T-cell (primary cell): ENCODE measurements at regions of chr10 and their contacts with region 1.

Region 1: DNA sequence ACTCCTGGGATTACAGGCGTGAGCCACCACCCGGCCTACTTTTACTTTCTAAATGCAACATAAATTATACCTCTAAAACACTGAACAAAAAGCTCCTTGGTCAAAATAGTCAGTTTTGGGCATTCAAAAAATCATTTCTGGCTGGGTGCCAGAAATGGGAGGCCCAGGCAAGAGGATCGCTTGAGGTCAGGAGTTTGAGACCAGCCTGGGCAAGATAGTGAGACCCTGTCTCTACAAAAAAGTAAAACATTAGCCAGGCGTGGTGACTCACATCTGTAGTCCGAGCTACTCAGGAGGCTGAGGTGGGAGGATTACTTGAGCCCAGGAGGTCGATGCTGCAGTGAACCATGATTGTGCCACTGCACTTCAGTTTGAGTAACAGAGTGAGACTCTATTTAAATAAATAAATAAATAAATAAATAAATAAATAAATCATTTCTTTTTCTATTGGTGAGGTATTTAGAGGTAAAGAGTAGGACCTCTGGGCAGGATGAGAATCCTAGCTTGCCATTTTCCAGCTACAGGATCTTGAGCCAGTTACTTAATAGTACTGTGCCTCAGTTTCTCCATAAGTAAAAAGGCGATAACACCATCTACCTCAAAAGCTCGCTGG is 87.6 kb downstream of the SKIDA1 start:
- DNase-seq: no peak
- ATAC-seq: no peak
- H3K4me3 ChIP-seq: no peak overlapping the region
- H3K4me3 Mint-ChIP-seq: no peak overlapping the region
- H3K27ac ChIP-seq: no peak overlapping the region
- H3K27ac Mint-ChIP-seq: no peak overlapping the region
- H3K4me1 ChIP-seq: no peaks in the 10 kb centered on the region
- H3K4me1 Mint-ChIP-seq: no peaks in the 10 kb centered on the region
- H3K27me3 ChIP-seq: peaks cover 0 to 4% of the 10 kb centered on the region in 2 experiments
- H3K27me3 Mint-ChIP-seq: peaks cover 4 to 6% of the 10 kb centered on the region in 2 donors

Region 2: DNA sequence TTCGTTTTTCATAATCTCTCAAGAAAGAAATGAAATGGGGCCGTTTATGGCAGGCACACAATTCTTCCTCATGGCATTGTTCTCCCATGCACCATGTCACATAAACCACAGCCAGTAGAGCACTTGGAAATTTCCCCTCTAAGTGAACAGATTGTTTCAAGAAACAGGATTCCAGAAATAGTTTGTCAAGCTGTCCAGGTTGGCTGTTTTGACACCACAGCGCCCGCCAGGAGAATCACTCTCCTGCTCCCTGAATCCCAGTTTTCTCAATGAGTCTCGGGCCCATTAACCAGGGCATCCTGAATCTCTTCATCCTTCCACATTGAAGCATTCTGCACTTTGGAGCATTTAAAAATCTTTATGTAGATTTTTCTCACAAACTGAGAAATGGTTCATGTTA is 368.6 kb before region 1 on chr10:
- CTCF ChIA-PET with region 1: no interaction called
- POLR2A ChIA-PET with region 1: no interaction called
- DNase-seq: no peak
- ATAC-seq: no peak
- H3K4me3 ChIP-seq: no peak overlapping the region
- H3K4me3 Mint-ChIP-seq: no peak overlapping the region
- H3K27ac ChIP-seq: no peak overlapping the region
- H3K27ac Mint-ChIP-seq: no peak overlapping the region
- H3K4me1 ChIP-seq: no peaks in the 10 kb centered on the region
- H3K4me1 Mint-ChIP-seq: no peaks in the 10 kb centered on the region
- H3K27me3 ChIP-seq: peaks cover 0 to 7% of the 10 kb centered on the region in 2 experiments
- H3K27me3 Mint-ChIP-seq: peaks cover 3 to 6% of the 10 kb centered on the region in 2 donors

Region 3: DNA sequence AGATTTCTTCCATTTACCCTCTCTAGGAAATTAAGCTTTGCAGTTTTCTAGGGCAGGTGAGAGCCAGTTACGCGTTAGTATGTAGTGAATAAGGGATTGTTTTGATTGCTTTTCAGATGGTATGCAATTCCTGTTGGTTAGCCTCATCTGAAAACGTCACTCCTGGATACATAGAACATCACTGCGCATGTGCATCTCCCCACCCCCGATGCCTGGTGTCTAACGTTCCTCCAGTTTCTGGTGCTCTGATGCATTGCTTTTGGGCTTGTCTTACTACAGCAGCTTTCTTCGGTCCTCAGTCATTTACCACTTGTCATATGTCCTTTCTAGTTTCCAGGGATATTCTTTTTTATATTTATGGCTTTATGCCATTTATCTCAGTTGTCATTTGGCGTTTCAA is 118.7 kb after region 1 on chr10:
- CTCF ChIA-PET with region 1: no interaction called
- POLR2A ChIA-PET with region 1: interaction called in 1 of 2 experiments, 12 read pairs
- DNase-seq: no peak
- ATAC-seq: no peak
- H3K4me3 ChIP-seq: no peak overlapping the region
- H3K4me3 Mint-ChIP-seq: no peak overlapping the region
- H3K27ac ChIP-seq: no peak overlapping the region
- H3K27ac Mint-ChIP-seq: peak overlapping the region in 1 of 2 donors; percentile 44
- H3K4me1 ChIP-seq: no peaks in the 10 kb centered on the region
- H3K4me1 Mint-ChIP-seq: peaks cover 22 to 39% (median 38%) of the 10 kb centered on the region in 3 donors
- H3K27me3 ChIP-seq: no peaks in the 10 kb centered on the region
- H3K27me3 Mint-ChIP-seq: no peaks in the 10 kb centered on the region